Psoas muscle (tissue), 8 donors: ENCODE measurements at regions of chr4 and their contacts with region 1.

Region 1: GRCh38 chr4:15799701-15800100 is 21.6 kb downstream of the CD38 start:
- DNase-seq: no peak
- ATAC-seq: peak in 1 of 4 donors; percentile 38
- H3K4me3 ChIP-seq: no peak overlapping the region
- H3K27ac ChIP-seq: peak overlapping the region; percentile 42
- H3K4me1 ChIP-seq: peaks cover 37% of the 10 kb centered on the region
- H3K27me3 ChIP-seq: no peaks in the 10 kb centered on the region
- CTCF ChIP-seq: no peak

Region 2: DNA sequence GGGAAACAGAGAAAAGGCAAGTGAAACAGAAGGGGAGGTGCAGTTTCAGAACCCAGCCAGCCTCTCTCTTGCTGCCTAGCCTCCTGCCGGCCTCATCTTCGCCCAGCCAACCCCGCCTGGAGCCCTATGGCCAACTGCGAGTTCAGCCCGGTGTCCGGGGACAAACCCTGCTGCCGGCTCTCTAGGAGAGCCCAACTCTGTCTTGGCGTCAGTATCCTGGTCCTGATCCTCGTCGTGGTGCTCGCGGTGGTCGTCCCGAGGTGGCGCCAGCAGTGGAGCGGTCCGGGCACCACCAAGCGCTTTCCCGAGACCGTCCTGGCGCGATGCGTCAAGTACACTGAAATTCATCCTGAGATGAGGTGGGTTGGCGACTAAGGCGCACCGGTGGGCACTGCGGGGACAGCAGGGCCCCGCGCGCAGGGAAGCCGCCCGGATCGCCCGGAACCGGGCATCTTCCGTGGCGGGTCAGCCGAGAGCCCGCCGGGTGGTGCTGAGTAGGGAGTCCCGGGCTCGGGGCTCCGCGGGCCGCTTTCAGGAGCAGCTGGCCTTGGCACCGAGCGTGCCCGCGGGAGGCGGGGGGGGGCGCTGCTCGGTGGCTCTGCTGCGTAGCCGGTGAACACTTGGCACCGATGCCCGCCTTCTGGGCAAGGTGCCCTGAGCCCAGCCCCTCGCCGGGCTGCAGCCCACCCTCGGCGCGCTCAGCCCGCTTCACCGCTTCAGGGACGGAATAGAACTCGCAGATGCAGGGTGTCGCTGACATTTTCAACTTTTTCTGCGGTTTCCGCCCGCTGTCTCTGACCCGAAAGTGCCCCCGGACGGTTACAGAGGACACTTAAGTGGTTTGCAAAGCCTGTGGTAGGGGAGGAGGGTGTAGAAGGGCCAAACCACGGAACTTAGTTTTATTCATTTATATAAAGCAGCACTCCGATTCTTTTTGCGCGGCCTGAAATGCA is 21.1 kb before region 1 on chr4 and contains the start of gene CD38:
- intact Hi-C with region 1: loop called in 1 of 2 experiments (anchors 2 kb)
- DNase-seq: peak; percentile 62 to 81
- ATAC-seq: peak; percentile 89 to 93 (median 92)
- H3K4me3 ChIP-seq: peak within 1 kb of the TSS; percentile 73
- H3K27ac ChIP-seq: peak within 1 kb of the TSS; percentile 85
- H3K4me1 ChIP-seq: peaks cover 20% of the 10 kb centered on the region
- H3K27me3 ChIP-seq: no peaks in the 10 kb centered on the region
- CTCF ChIP-seq: no peak
- total RNA-seq, gene CD38: 3.1 to 6.8 (median 4.5) TPM